Cardiac septum (tissue), 1 donor: ENCODE measurements at regions of chr1 and their contacts with region 1.

Region 1: GRCh38 chr1:203408486-203409427 is 57.8 kb upstream of the FMOD start:
- DNase-seq: peak; percentile 90

Region 2: DNA sequence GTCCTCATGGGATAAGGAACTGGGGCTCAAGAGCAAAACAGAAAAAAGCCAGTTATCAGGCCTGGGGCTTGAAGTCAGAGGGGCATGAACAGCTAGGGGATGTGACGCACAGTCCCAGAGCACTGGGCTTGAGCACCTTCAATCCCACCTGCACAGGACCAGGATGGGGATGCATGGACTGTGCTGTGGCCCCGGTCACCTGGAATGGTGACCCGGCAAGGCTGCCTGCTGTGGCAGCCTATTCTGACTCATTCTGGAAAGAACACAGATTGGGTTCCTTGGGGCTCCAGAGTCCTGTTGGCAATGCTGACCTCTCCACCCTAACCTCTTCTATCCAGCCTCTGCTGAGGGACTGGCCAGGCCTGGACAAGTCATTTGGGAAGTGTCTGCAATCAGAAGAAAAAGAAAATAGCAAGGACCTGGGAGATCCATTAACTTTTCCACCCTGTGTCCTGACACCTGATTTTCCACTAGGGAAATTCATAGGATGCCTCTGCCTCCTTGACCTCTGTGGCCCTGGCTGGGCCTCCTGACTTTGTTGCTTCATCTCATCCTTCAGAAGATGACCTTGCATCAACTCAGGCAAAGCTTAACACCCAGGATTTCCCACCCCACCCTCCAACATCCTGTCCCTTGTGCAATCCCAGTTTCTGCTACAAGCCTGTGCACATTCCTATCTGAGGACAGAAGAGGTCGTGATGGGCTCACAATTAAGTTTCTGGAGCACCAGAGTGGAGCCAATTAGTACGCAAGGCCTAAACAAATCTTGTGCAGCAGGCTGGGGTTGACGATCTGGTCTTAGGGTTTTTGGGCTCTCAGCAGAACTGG is 39.9 kb before region 1 on chr1:
- intact Hi-C with region 1: loop called (anchors 5 kb)
- DNase-seq: no peak